ENCODE measurements at regions of chr15 and their contacts with region 1.

Region 1: GRCh38 chr15:57340682-57341259 is 35.5 kb upstream of the CGNL1 start:
- DNase-seq: peak; percentile 42
- H3K4me3 ChIP-seq: no peak overlapping the region
- H3K27ac ChIP-seq: no peak overlapping the region
- H3K27me3 ChIP-seq: no peaks in the 10 kb centered on the region
- CTCF ChIP-seq: peak; percentile 80

Region 2: GRCh38 chr15:57451555-57451954 is 110.8 kb after region 1 on chr15:
- in situ Hi-C with region 1: no loop called
- DNase-seq: no peak
- H3K4me3 ChIP-seq: no peak overlapping the region
- H3K27ac ChIP-seq: no peak overlapping the region
- H3K27me3 ChIP-seq: no peaks in the 10 kb centered on the region
- CTCF ChIP-seq: no peak

Region 3: DNA sequence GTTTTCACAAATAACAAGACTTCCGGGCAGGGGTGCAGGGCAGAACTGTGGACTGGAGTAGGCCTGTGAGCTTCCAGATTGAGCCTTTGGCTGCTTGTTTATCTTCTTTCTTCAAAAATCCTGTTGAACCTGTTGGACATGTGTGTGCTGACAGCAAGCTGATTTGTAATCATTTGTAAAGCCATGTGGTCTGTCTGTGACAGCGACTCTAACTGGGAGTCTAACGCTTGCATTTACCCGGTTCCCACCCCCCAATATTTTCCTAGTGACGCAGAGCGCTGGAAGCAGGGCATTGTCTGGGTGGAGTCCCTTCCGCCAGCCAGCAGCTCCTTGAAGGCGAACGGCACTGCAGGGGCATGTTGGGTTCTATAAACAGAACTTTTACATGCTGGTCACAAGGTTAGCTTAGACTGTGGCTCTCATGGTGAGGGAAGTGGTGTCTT is 165.2 kb after region 1 on chr15:
- in situ Hi-C with region 1: loop called (anchors 25 kb)
- DNase-seq: peak; percentile 77
- H3K4me3 ChIP-seq: no peak overlapping the region
- H3K27ac ChIP-seq: peak overlapping the region; percentile 85
- H3K27me3 ChIP-seq: no peaks in the 10 kb centered on the region
- CTCF ChIP-seq: no peak

Region 4: DNA sequence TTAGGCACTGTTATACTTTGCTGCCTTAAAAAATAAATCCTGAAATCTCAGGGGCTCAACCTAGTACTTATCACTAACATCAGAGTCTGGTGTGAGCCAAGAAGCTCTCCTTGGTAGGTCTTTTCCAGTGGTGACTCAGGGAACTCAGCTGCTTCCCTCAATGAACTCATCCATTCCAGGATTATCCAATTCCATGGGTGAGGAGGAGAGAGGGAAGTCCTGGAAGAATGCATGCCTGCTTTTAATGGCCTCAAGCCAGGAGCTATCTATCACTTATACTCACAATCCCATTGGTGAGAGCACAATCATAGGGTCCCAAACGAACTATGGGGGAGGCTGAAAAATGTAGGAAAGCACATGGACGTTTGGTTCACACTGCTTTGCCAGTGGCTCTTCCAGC is 479.3 kb after region 1 on chr15:
- in situ Hi-C with region 1: no loop called
- DNase-seq: peak; percentile 28
- H3K4me3 ChIP-seq: no peak overlapping the region
- H3K27ac ChIP-seq: no peak overlapping the region
- H3K27me3 ChIP-seq: no peaks in the 10 kb centered on the region
- CTCF ChIP-seq: no peak

Measured in brain microvascular endothelial cell (primary cell).